Breast epithelium (tissue), 4 donors: ENCODE measurements at regions of chr5 and their contacts with region 1.

Region 1: GRCh38 chr5:81207009-81207408 is 26.1 kb upstream of the CKMT2 start:
- DNase-seq: no peak
- H3K4me3 ChIP-seq: no peak overlapping the region
- H3K27ac ChIP-seq: no peak overlapping the region
- H3K4me1 ChIP-seq: no peaks in the 10 kb centered on the region
- H3K27me3 ChIP-seq: no peaks in the 10 kb centered on the region
- CTCF ChIP-seq: no peak
- POLR2A ChIP-seq: no peak

Region 2: DNA sequence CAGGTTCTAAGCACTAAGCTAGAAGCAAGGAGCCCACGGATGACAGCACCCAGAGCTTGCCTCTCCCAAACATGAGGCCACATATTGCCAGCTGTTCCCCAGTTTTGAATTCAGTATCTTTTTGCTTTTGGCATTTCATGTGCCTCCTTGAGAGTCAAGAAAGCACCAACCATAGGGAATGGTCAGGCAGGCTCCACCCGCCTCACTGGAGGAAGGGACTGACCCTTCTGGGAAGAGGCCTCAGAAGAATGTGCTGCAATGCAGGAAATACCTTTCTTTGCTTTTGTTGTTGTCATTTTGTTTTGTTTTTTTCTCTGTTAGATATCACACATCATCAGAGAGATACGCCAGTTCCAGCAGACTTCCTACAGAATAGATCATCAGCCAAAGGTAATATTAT is 12.4 kb after region 1 on chr5:
- intact Hi-C with region 1: no loop called
- DNase-seq: no peak
- H3K4me3 ChIP-seq: no peak overlapping the region
- H3K27ac ChIP-seq: no peak overlapping the region
- H3K4me1 ChIP-seq: no peaks in the 10 kb centered on the region
- H3K27me3 ChIP-seq: no peaks in the 10 kb centered on the region
- CTCF ChIP-seq: no peak
- POLR2A ChIP-seq: no peak

Region 3: DNA sequence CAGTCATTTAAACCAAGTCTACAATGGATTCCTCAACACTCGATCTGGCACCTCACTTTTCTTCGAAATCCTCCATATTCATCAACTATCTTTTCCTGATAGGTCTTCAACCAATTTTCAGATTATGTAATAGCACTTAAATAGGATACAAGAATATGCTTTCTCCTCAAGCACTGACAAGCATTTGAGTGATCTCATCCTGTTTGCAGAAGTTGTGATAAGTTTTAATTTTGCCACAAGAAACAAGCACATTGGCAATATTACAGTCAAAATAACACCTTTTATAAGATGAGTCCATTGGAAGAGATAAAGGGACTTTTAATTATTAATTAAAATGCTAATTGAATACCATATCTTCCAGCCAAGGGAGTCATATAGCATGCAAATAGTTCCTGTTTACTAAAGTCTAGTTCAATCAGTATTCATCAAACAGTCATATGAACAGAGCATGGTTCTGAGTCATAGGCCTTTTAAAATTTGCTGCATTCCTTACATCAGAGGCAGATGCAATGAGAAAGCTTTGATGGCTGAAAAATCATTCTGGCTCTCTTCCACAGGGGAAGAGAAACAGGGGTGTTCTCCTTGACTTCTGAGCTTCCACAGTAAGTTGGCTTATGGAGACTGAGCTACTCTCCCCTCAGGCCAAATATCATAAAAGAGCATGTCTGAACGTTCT is 61.6 kb after region 1 on chr5:
- intact Hi-C with region 1: no loop called
- DNase-seq: no peak
- H3K4me3 ChIP-seq: no peak overlapping the region
- H3K27ac ChIP-seq: peak overlapping the region in 1 of 2 donors; percentile 20
- H3K4me1 ChIP-seq: no peaks in the 10 kb centered on the region
- H3K27me3 ChIP-seq: no peaks in the 10 kb centered on the region
- CTCF ChIP-seq: no peak
- POLR2A ChIP-seq: no peak

Region 4: DNA sequence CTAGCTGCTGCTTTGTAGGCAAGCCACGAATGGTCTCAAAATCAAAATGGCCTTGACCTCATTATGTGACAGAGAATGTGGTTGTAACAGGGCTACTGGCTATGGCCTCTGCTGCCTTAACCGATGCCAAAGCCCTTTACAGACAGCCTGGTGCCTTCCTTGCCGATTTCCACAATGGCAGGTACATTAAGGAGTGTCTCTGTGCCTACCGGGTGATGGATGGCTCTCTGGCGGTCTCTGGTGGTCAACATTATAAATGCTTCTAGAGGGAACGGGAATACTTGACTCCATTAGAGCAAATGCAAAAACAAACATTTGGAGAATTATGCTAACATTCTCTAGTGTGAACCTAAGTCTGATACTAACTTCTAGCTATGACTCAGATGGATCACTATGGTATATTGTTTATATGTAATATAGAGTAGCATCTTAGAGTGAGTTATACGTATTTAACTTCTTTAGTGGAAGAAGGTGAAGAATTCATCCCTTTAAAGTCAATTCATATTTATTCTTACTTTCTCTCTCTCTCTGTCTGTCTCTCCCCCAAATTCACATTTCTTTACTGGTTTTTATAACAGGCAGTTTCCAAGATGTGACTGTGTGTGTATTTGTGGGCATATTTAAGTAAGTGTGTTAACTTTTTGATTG is 1018.6 kb after region 1 on chr5:
- intact Hi-C with region 1: loop called (anchors 10 kb)
- DNase-seq: peak; percentile 18 to 53
- H3K4me3 ChIP-seq: no peak overlapping the region
- H3K27ac ChIP-seq: no peak overlapping the region
- H3K4me1 ChIP-seq: no peaks in the 10 kb centered on the region
- H3K27me3 ChIP-seq: no peaks in the 10 kb centered on the region
- CTCF ChIP-seq: peak in 2 of 3 donors; percentile 62 to 67
- POLR2A ChIP-seq: no peak